ENCODE measurements at regions of chr3 and their contacts with region 1.

Region 1: DNA sequence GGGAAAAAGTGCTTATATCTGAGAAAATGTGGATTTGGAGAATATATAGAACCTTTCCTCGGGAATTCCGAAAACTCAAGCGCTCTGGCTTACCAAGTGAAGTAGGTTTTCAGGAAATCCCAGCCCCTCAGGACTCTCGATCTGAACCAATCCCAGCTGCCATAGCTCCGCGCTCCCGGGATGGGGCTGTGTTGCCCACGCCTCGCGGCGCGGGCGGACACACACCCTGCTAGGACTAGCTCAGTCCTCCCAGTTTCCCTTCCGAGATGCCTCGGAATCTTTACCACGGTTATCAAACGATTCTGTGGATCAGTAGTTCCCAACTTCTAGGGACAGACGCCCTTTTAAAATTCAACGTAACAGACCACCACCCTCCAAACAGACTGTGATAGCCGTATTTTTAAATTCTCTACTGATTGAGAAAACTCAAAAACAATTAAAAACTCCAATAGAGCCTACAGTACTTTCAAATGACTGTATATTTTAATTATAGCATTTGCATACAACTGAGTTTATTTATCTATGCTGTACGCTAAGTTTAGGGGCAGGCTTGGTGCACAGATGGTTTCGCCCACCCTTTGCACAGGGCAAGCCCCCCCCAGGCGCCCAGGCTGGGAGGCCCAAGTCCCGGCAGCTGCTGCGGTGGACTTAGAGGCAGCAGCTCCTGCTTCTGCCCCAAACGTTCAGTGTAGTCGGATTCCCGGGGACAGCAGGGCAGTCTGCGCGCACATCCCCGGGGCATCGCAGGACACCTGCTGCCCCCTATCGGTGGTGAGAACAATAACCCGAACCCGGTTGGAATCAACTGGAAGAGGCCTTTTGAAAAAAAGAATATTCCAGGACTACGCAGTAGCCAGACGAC is 52.3 kb downstream of the CCDC54 start:
- DNase-seq: peak; percentile 70
- H3K4me3 ChIP-seq: peak overlapping the region; percentile 61
- H3K27ac ChIP-seq: no peak overlapping the region
- H3K27me3 ChIP-seq: no peaks in the 10 kb centered on the region
- CTCF ChIP-seq: peak; percentile 91

Region 2: GRCh38 chr3:106930086-106930485 is 499.5 kb before region 1 on chr3:
- CTCF ChIA-PET with region 1: no interaction called
- POLR2A ChIA-PET with region 1: no interaction called
- DNase-seq: no peak
- H3K4me3 ChIP-seq: no peak overlapping the region
- H3K27ac ChIP-seq: no peak overlapping the region
- H3K27me3 ChIP-seq: no peaks in the 10 kb centered on the region
- CTCF ChIP-seq: no peak

Region 3: GRCh38 chr3:107241224-107241623 is 188.3 kb before region 1 on chr3:
- CTCF ChIA-PET with region 1: interaction called, 60 read pairs
- POLR2A ChIA-PET with region 1: interaction called, 4 read pairs
- DNase-seq: no peak
- H3K4me3 ChIP-seq: peak overlapping the region; percentile 90
- H3K27ac ChIP-seq: no peak overlapping the region
- H3K27me3 ChIP-seq: no peaks in the 10 kb centered on the region
- CTCF ChIP-seq: 0 out of 2 replicates have a peak, but pooled peaks have one; percentile 12

Region 4: DNA sequence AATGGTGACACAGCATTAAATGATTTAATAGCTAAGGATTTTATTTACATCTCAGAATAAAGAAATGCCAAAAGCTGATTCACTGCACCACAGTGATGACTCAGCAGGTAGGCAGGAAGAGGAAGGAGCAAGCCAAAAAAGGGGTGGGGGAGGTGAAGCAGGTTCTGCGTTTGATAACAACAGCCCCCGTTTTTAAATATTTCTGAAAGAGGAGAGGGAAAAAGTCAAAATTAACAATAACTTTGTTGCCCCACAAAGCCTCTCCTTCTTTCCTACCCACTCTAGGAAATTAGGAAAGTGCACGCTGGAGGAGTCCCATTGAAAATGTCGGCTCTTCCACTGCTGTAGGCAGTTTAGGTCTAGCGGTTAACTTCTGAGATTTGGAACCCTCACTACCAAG is 62.2 kb before region 1 on chr3:
- CTCF ChIA-PET with region 1: interaction called, 10 read pairs
- POLR2A ChIA-PET with region 1: no interaction called
- DNase-seq: peak; percentile 57
- H3K4me3 ChIP-seq: no peak overlapping the region
- H3K27ac ChIP-seq: no peak overlapping the region
- H3K27me3 ChIP-seq: no peaks in the 10 kb centered on the region
- CTCF ChIP-seq: no peak

Region 5: GRCh38 chr3:107404727-107405469 is 24.7 kb before region 1 on chr3:
- CTCF ChIA-PET with region 1: interaction called, 41 read pairs
- POLR2A ChIA-PET with region 1: interaction called, 3 read pairs
- DNase-seq: no peak
- H3K4me3 ChIP-seq: no peak overlapping the region
- H3K27ac ChIP-seq: no peak overlapping the region
- H3K27me3 ChIP-seq: no peaks in the 10 kb centered on the region
- CTCF ChIP-seq: no peak

Region 6: DNA sequence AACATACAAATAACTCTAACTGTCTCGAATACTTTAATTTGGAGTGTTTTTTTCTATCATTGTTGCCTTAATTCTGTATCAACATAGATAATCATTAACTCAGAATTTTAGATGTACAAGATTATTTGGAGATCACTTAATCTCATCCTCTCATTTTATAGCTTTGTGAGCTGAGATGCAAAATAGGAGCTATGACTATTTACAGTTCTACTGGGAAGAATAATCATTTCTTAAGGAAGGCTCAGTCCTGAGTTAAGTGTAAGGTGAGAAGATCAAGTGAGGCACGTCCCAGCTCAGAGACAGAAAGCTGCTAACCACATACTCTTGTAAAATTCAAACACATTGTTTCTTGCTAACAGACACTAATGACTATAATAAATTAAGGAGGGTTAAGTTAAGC is 13.9 kb after region 1 on chr3:
- CTCF ChIA-PET with region 1: interaction called, 13 read pairs
- POLR2A ChIA-PET with region 1: no interaction called
- DNase-seq: no peak
- H3K4me3 ChIP-seq: no peak overlapping the region
- H3K27ac ChIP-seq: no peak overlapping the region
- H3K27me3 ChIP-seq: no peaks in the 10 kb centered on the region
- CTCF ChIP-seq: no peak

Region 7: DNA sequence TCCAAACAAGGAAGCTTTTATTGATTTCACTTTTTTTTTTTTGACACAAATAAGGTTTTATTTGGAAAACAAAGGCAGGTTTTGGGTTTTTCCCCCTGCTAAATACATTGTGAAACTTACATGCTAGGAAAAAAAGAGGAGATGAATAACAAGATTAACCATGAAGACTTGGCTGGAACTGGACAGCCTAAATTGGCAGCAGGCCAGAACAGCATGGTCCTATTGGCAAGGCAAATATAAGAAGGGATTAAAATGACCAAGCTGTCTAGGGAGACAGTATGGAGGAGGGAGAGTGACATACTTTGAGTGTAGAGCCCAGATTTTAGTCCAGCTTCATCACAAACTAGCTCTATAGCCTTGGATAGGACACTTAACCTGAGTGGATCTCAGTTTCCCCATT is 29.3 kb after region 1 on chr3:
- CTCF ChIA-PET with region 1: interaction called, 27 read pairs
- POLR2A ChIA-PET with region 1: no interaction called
- DNase-seq: no peak
- H3K4me3 ChIP-seq: no peak overlapping the region
- H3K27ac ChIP-seq: no peak overlapping the region
- H3K27me3 ChIP-seq: no peaks in the 10 kb centered on the region
- CTCF ChIP-seq: no peak

Measured in AG04450 (cell line).